Ovary (tissue), 10 donors: ENCODE measurements at regions of chr22 and their contacts with region 1.

Region 1: GRCh38 chr22:44828193-44828592 is 75.8 kb downstream of the ARHGAP8 start:
- DNase-seq: no peak
- H3K4me3 ChIP-seq: no peak overlapping the region
- H3K27ac ChIP-seq: no peak overlapping the region
- H3K4me1 ChIP-seq: no peaks in the 10 kb centered on the region
- H3K27me3 ChIP-seq: no peaks in the 10 kb centered on the region
- CTCF ChIP-seq: no peak
- EP300 ChIP-seq: no peak
- POLR2A ChIP-seq: no peak

Region 2: GRCh38 chr22:44870021-44870420 is 41.8 kb after region 1 on chr22:
- intact Hi-C with region 1: no loop called
- DNase-seq: no peak
- H3K4me3 ChIP-seq: no peak overlapping the region
- H3K27ac ChIP-seq: no peak overlapping the region
- H3K4me1 ChIP-seq: no peaks in the 10 kb centered on the region
- H3K27me3 ChIP-seq: no peaks in the 10 kb centered on the region
- CTCF ChIP-seq: no peak
- EP300 ChIP-seq: no peak
- POLR2A ChIP-seq: no peak

Region 3: DNA sequence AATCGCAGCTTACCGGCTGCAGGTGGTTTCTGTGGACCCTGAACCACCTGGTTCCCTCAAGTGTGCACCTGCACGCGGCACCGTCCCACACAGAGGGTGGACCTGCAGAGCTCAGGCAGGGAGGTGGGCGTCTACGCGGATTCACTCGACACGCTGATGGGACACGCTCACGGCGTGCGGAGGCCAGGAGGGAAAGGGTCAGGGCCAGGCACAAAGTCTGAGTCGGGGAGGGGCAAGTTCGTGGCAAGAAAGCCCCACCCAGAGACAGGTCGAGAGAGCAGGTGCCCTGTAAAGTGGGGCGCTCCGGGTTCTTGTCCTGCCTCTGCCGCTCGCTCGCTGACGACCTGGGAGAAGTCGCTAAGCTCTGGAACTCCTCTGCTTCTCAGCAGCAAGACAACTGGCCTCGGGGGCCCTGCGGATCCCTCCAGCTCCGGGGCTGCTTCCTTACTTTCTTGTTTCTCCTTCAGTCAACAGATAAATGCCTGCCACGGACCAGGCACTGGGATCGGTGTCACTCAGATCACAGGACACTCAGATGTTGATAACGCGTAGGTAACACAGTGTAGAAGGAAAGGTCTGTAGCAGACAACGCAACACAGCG is 263.2 kb after region 1 on chr22:
- intact Hi-C with region 1: loop called in 2 of 4 experiments (anchors 2 to 5 kb)
- DNase-seq: no peak
- H3K4me3 ChIP-seq: no peak overlapping the region
- H3K27ac ChIP-seq: no peak overlapping the region
- H3K4me1 ChIP-seq: no peaks in the 10 kb centered on the region
- H3K27me3 ChIP-seq: no peaks in the 10 kb centered on the region
- CTCF ChIP-seq: no peak
- EP300 ChIP-seq: no peak
- POLR2A ChIP-seq: no peak